ENCODE measurements at regions of chr13 and their contacts with region 1.

Region 1: GRCh38 chr13:24020375-24020830 is 123.1 kb upstream of the C1QTNF9B start:
- DNase-seq: peak; percentile 84
- H3K4me3 Mint-ChIP-seq: no peak overlapping the region
- H3K27ac Mint-ChIP-seq: no peak overlapping the region
- H3K4me1 Mint-ChIP-seq: peaks cover 3% of the 10 kb centered on the region
- H3K27me3 Mint-ChIP-seq: peaks cover 3% of the 10 kb centered on the region

Region 2: DNA sequence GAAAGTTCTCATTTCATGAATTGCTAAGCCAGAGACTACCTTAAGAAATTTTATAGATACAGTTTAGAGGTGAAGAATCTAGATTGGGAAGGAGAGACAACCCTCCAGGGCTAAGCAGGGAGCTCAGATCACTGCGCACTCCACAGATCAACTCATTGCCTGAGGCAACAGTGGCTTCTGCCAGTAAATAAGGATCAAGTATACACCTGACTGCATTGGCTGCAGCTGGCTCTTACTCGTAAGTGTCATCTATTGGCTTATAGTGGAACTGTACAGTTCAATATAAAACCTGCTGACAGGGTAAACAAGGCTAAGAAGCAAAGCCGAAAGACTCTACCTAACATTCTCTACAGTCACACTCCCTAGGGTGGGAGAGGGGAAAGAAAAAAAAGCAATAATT is 105.1 kb before region 1 on chr13:
- intact Hi-C with region 1: no loop called
- DNase-seq: no peak
- H3K4me3 Mint-ChIP-seq: no peak overlapping the region
- H3K27ac Mint-ChIP-seq: no peak overlapping the region
- H3K4me1 Mint-ChIP-seq: peaks cover 8% of the 10 kb centered on the region
- H3K27me3 Mint-ChIP-seq: peaks cover 56% of the 10 kb centered on the region

Region 3: GRCh38 chr13:24053519-24054251 is 33.3 kb after region 1 on chr13:
- intact Hi-C with region 1: loop called (anchors 1 kb)
- DNase-seq: peak; percentile 89
- H3K4me3 Mint-ChIP-seq: no peak overlapping the region
- H3K27ac Mint-ChIP-seq: no peak overlapping the region
- H3K4me1 Mint-ChIP-seq: peaks cover 11% of the 10 kb centered on the region
- H3K27me3 Mint-ChIP-seq: peaks cover 19% of the 10 kb centered on the region